Head of caudate nucleus (tissue), 42 donors: ENCODE measurements at regions of chr3 and their contacts with region 1.

Region 1: GRCh38 chr3:134473868-134474546 is 11.8 kb downstream of the ANAPC13 start:
- DNase-seq: peak in 40 of 42 donors; percentile 23 to 96 (median 84)

Region 2: GRCh38 chr3:134364061-134364935 is 109.7 kb before region 1 on chr3:
- intact Hi-C with region 1: loop called (anchors 10 kb)
- DNase-seq: peak; percentile 66 to 94 (median 84)